Prostate gland (tissue), 2 donors: ENCODE measurements at regions of chr14 and their contacts with region 1.

Region 1: DNA sequence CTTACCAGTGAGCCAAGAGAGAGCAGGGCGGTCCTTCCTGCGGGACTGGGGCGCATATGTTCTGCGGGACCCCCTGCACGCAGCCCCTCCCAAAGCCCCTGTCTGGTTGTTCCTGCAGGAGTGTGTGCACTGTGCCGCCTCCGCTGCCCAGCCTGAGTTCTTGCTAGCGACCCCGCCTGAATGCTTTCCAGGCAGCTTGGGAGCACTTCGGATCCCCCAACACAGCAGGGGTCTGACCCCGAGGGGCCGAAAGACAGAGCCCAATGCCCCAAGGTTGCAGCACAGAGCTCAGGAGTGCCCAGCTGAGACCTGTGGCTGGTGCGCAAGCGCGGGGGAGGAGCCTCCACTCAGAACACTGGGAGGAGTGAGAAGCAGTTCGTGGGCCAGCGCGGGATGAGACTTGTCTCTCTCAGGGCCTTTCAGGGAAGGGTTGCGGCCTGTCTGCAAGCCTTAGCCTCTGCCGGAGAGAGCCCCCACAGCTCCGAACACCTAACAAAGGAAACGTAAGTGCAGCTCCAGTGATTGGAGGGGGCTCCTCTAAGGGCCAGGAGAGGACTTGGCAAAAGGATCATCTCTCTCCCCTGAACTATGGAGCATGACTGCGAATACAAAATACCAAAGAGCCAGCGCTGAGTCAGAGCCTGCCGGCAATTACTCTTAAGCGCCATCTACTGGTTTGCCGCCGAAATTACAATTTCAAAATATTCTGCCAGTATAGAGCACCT is 50.5 kb downstream of the GTF2A1 start:
- DNase-seq: peak; percentile 90
- H3K4me3 ChIP-seq: peak overlapping the region; percentile 43 to 47
- H3K27ac ChIP-seq: peak overlapping the region; percentile 90 to 92
- H3K4me1 ChIP-seq: no peaks in the 10 kb centered on the region
- H3K27me3 ChIP-seq: no peaks in the 10 kb centered on the region
- CTCF ChIP-seq: peak; percentile 81 to 97 (median 90)
- POLR2A ChIP-seq: peak; percentile 59

Region 2: GRCh38 chr14:80776657-80777056 is 393.6 kb before region 1 on chr14:
- intact Hi-C with region 1: no loop called
- DNase-seq: no peak
- H3K4me3 ChIP-seq: no peak overlapping the region
- H3K27ac ChIP-seq: no peak overlapping the region
- H3K4me1 ChIP-seq: no peaks in the 10 kb centered on the region
- H3K27me3 ChIP-seq: no peaks in the 10 kb centered on the region
- CTCF ChIP-seq: no peak
- POLR2A ChIP-seq: no peak

Region 3: DNA sequence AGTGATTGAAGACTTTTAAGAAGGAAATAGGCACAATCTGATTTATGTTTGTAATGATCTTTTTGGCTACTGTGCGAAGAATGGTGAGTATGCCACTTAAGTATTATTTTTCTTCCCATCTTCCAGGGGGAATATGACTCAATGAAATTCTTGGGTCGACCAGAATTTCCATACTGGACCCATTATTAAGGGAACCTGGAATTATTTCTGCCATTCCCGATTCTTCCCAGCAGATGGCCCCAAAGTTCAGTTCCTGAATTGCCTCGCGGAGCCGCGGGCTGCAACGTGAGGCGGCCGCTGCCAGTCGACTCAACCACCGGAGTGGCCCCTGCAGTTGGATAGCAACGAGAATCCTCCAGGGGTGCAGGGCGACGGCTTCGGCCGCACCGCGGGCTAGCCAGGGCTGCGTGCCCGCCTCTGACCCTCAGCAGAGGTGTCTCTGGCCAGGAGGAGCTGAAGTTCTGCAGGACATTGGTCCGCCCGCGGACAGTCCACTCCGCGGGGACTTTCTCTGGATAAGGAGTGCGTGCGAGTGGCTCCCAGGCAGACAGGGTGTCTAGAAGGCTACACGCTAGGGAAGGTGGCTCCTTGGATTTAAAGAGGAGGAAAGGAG is 215.5 kb before region 1 on chr14:
- intact Hi-C with region 1: loop called (anchors 10 kb)
- DNase-seq: peak; percentile 70
- H3K4me3 ChIP-seq: peak overlapping the region; percentile 24 to 37
- H3K27ac ChIP-seq: no peak overlapping the region
- H3K4me1 ChIP-seq: no peaks in the 10 kb centered on the region
- H3K27me3 ChIP-seq: peaks cover 3% of the 10 kb centered on the region
- CTCF ChIP-seq: peak; percentile 55 to 86 (median 75)
- POLR2A ChIP-seq: no peak

Region 4: GRCh38 chr14:80996049-80996901 is 174.0 kb before region 1 on chr14:
- intact Hi-C with region 1: loop called (anchors 5 kb)
- DNase-seq: peak; percentile 42
- H3K4me3 ChIP-seq: no peak overlapping the region
- H3K27ac ChIP-seq: no peak overlapping the region
- H3K4me1 ChIP-seq: no peaks in the 10 kb centered on the region
- H3K27me3 ChIP-seq: no peaks in the 10 kb centered on the region
- CTCF ChIP-seq: peak in 3 of 4 experiments; percentile 48 to 77 (median 75)
- POLR2A ChIP-seq: no peak